Common myeloid progenitor, CD34-positive (primary cell): ENCODE measurements at regions of chr7 and their contacts with region 1.

Region 1: DNA sequence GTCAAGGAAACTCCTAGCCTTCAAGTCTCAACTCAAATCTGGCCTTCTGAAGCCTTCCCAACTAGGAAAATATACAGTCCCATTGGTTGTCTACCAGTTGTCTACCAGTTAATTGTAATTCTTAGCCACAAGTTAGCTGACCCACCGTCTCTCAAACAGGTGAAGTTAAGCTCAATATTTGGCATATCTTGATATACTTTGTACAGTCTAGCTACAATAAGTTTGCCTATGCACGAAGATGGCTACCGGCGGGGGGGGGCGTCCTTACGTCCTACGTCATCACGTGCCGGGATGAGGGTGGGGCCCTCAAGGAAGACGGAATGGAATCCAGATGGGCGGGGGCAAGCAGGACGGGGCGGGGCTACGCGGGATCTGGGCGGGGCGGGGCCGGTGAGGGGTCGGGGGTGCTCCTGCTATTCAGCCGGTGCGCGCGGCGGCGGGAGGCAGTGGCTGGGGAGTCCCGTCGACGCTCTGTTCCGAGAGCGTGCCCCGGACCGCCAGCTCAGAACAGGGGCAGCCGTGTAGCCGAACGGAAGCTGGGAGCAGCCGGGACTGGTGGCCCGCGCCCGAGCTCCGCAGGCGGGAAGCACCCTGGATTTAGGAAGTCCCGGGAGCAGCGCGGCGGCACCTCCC is at the start of gene AHR:
- DNase-seq: peak; percentile 95 to 97 (median 96)
- H3K4me3 ChIP-seq: peak within 1 kb of the TSS; percentile 85 to 100 (median 93)
- H3K27ac ChIP-seq: peak within 1 kb of the TSS; percentile 46 to 71
- H3K4me1 ChIP-seq: peaks cover 17 to 35% (median 33%) of the 10 kb centered on the region in 4 experiments
- H3K27me3 ChIP-seq: no peaks in the 10 kb centered on the region

Region 2: DNA sequence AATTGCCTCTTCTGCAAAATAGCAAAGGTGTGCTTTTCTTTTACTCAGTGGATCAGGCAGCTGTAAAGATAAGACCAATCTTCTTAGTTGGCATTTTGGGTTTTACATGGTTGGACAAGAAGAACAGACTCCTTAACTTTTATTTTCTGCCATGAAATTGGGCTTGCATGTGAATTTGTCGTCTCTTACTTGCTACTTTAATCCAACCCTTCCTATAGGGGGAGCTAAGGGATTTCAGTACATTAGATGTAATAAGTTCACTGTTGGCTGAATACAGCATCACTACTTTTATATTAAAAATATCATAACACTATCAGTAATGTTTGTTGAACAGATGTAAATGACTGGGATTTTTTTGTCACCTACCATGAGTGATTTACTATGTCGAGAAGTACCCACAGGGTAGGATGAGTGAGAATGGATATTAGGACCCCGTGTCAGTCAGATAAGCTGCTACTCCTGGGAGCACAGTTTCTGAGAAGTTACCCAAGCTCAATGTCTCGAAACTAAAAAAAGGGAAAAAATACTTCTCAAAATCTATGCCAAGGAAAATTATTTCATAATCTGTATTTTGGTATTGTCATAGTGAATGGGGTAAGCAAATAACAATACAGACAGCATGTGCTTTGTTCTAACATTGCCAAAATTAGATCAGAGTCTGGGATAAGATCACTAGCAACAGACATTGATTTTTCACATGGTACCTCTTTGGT is 289.2 kb before region 1 on chr7:
- CTCF ChIA-PET with region 1: interaction called, 19 read pairs
- POLR2A ChIA-PET with region 1: no interaction called
- DNase-seq: peak; percentile 58 to 78 (median 73)
- H3K4me3 ChIP-seq: no peak overlapping the region
- H3K27ac ChIP-seq: no peak overlapping the region
- H3K4me1 ChIP-seq: peaks cover 0 to 10% (median 3%) of the 10 kb centered on the region in 4 experiments
- H3K27me3 ChIP-seq: no peaks in the 10 kb centered on the region

Region 3: DNA sequence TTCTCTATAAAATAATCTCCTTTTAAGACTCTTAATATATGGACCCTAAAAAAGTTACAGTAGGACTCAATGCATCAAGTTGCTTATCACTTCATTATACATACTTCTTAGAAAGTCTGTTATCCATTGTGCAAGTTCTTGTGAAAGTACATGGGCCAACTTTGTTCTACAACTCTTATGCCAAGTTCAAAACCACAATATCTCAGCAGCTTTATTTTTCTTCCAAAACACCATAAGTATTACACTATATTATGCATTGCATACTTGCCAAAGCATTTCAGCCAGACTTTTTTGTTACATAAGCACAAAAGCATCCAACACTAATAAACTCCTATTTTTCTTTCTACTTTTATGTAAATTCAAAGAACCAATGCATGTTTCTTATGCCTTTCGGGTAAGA is 94.5 kb after region 1 on chr7:
- CTCF ChIA-PET with region 1: no interaction called
- POLR2A ChIA-PET with region 1: no interaction called
- DNase-seq: no peak
- H3K4me3 ChIP-seq: no peak overlapping the region
- H3K27ac ChIP-seq: no peak overlapping the region
- H3K4me1 ChIP-seq: no peaks in the 10 kb centered on the region
- H3K27me3 ChIP-seq: no peaks in the 10 kb centered on the region

Region 4: DNA sequence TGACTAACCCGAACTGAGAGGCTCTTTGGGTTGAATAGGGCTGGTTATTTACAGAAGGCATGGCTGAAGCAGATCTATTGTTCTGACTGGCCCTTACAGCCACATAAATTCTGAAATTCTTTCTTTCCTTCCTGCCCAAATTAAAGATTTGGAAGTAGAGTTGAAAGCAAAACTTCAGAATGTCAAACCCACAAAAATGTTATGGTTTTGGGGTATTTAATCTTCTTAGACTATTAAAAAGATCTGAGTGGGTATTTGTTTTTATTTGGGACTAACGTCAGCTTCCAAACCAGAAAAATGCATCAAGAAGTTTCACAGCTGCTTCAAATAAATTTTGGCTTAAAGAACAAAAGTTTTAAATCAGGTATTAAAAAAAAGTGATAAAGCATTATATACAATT is 124.6 kb after region 1 on chr7:
- CTCF ChIA-PET with region 1: no interaction called
- POLR2A ChIA-PET with region 1: no interaction called
- DNase-seq: no peak
- H3K4me3 ChIP-seq: no peak overlapping the region
- H3K27ac ChIP-seq: no peak overlapping the region
- H3K4me1 ChIP-seq: no peaks in the 10 kb centered on the region
- H3K27me3 ChIP-seq: no peaks in the 10 kb centered on the region

Region 5: DNA sequence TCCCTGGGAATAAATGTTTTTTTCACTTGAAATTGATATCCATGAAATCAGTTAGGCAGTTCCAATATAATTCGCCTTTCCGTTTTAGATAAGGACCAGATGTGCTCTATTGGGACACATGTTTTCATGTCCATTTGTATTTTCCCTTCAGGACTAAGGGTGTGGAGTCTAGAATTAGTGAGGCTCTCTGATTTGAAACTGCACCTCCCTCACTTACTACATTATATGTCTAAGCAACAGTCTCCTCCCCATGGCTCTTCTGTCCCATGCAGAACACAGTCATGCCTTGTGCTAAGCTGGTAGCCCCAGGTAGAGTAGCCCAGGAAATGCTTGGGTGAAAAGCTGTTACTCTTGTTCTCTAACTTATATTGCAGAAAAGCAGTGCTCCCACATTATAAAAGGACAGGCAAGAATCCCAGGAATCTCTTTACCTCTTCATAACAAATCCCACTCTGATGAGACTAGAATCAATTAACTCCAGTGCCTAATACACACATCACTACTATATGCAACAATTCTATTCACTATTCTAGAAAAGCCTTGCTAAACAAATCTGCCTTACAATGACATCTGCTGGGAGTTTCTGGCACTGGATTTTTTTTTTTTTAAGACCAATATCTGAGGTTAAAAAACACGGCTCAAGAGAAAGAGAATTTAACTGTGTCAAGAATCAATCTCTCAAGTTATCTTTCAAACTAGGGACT is 348.1 kb after region 1 on chr7:
- CTCF ChIA-PET with region 1: interaction called, 13 read pairs
- POLR2A ChIA-PET with region 1: no interaction called
- DNase-seq: peak; percentile 24 to 52 (median 45)
- H3K4me3 ChIP-seq: no peak overlapping the region
- H3K27ac ChIP-seq: no peak overlapping the region
- H3K4me1 ChIP-seq: no peaks in the 10 kb centered on the region
- H3K27me3 ChIP-seq: no peaks in the 10 kb centered on the region